Mucosa of descending colon (tissue), 3 donors: ENCODE measurements at regions of chr6 and their contacts with region 1.

Region 1: DNA sequence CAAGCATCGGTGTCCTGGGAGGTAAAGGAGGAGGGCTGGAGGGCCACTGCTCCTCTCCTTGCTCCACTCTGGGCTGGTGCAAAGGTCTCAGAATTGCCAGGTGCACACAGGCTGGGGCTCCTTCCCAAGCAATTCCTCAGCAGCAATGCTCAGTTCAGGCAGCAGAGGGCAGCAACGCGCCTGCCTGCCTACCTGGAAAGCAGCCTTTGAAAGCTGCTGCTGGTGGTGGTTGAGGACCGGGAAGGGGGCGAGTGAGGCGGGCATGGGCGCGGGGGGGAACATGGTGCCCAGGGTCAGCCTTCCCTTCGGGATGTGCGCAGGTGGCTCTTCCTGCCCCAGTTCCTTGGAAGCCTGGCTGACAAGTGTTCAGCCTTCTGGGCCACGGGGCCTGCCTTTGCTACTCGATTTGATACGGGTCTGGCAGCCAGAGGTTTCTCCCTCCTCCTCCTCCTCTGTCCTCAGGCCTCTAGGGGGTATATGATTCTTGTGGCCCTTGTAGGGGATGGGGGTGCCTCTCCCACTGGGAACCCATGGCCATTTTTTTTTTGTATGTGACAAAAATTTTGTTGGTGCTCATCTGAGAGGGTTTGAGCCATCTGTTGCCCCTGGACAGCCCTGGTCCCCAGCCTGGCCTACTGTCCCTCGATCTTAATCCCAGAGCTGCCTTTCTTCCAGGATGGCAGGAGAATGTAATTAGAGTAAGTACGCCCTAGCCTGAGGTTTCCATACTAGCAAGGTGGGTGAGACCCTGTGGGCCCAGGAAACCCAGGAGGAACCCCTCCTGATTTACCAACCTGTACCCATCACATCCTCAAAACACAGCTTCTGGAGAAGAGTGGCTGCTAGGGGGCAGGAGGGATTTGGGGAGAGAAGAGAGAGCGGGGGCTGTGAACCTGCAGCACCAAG is 20.1 kb downstream of the MRPS18A start:
- DNase-seq: peak; percentile 88 to 98 (median 96)
- ATAC-seq: peak; percentile 79
- H3K4me3 ChIP-seq: no peak overlapping the region
- H3K4me1 ChIP-seq: peaks cover 27% of the 10 kb centered on the region
- CTCF ChIP-seq: peak; percentile 96

Region 2: GRCh38 chr6:43758617-43759050 is 91.1 kb after region 1 on chr6:
- intact Hi-C with region 1: loop called (anchors 10 kb)
- DNase-seq: peak in 2 of 3 donors; percentile 50 to 65
- ATAC-seq: peak; percentile 64
- H3K4me3 ChIP-seq: no peak overlapping the region
- H3K4me1 ChIP-seq: no peaks in the 10 kb centered on the region
- CTCF ChIP-seq: peak; percentile 65

Region 3: DNA sequence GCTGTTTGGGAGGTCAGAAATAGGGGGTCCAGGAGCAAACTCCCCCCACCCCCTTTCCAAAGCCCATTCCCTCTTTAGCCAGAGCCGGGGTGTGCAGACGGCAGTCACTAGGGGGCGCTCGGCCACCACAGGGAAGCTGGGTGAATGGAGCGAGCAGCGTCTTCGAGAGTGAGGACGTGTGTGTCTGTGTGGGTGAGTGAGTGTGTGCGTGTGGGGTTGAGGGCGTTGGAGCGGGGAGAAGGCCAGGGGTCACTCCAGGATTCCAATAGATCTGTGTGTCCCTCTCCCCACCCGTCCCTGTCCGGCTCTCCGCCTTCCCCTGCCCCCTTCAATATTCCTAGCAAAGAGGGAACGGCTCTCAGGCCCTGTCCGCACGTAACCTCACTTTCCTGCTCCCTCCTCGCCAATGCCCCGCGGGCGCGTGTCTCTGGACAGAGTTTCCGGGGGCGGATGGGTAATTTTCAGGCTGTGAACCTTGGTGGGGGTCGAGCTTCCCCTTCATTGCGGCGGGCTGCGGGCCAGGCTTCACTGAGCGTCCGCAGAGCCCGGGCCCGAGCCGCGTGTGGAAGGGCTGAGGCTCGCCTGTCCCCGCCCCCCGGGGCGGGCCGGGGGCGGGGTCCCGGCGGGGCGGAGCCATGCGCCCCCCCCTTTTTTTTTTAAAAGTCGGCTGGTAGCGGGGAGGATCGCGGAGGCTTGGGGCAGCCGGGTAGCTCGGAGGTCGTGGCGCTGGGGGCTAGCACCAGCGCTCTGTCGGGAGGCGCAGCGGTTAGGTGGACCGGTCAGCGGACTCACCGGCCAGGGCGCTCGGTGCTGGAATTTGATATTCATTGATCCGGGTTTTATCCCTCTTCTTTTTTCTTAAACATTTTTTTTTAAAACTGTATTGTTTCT is 102.3 kb after region 1 on chr6 and contains the start of gene VEGFA:
- intact Hi-C with region 1: loop called in 1 of 2 experiments (anchors 10 kb)
- DNase-seq: peak; percentile 91 to 95 (median 93)
- ATAC-seq: peak; percentile 68
- H3K4me3 ChIP-seq: peak within 1 kb of the TSS; percentile 81
- H3K4me1 ChIP-seq: peaks cover 34% of the 10 kb centered on the region
- CTCF ChIP-seq: peak; percentile 89
- total RNA-seq, gene VEGFA: 89.4 to 165 (median 94.7) TPM